Caco-2 (cell line): ENCODE measurements at regions of chr10 and their contacts with region 1.

Region 1: GRCh38 chr10:21020545-21020944 is 123.4 kb upstream of the NEBL start:
- DNase-seq: peak; percentile 66 to 72
- H3K4me3 ChIP-seq: no peak overlapping the region
- H3K4me3 Mint-ChIP-seq: no peak overlapping the region
- H3K27ac Mint-ChIP-seq: no peak overlapping the region
- H3K4me1 ChIP-seq: no peaks in the 10 kb centered on the region
- H3K4me1 Mint-ChIP-seq: peaks cover 7% of the 10 kb centered on the region
- H3K27me3 ChIP-seq: no peaks in the 10 kb centered on the region
- H3K27me3 Mint-ChIP-seq: no peaks in the 10 kb centered on the region
- CTCF ChIP-seq: peak; percentile 56

Region 2: DNA sequence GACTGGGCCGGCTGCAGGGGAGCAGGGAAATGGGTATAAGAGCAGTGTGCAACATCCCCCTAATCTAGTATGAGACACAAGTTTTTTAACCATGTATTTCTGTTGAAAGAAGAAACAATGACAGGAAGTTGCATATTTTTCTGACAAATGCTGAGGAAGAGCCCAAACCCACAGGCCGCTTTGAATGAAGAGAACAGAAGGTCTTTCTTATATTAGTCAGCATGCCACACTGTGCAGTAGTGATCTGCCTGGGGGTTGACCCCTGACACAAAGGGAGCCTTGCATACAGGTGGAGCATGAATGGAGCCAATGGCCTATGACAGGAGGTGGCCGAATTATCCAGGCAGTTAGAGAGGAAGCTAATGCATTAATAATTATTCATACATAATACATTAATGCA is 686.0 kb before region 1 on chr10:
- CTCF ChIA-PET with region 1: no interaction called
- POLR2A ChIA-PET with region 1: no interaction called
- intact Hi-C with region 1: no loop called
- DNase-seq: no peak
- H3K4me3 ChIP-seq: no peak overlapping the region
- H3K4me3 Mint-ChIP-seq: no peak overlapping the region
- H3K27ac Mint-ChIP-seq: no peak overlapping the region
- H3K4me1 ChIP-seq: no peaks in the 10 kb centered on the region
- H3K4me1 Mint-ChIP-seq: no peaks in the 10 kb centered on the region
- H3K27me3 ChIP-seq: no peaks in the 10 kb centered on the region
- H3K27me3 Mint-ChIP-seq: peaks cover 8% of the 10 kb centered on the region
- CTCF ChIP-seq: no peak

Region 3: GRCh38 chr10:20877986-20878983 is 142.3 kb before region 1 on chr10:
- CTCF ChIA-PET with region 1: no interaction called
- POLR2A ChIA-PET with region 1: no interaction called
- intact Hi-C with region 1: loop called (anchors 5 kb)
- DNase-seq: no peak
- H3K4me3 ChIP-seq: no peak overlapping the region
- H3K4me3 Mint-ChIP-seq: no peak overlapping the region
- H3K27ac Mint-ChIP-seq: no peak overlapping the region
- H3K4me1 ChIP-seq: no peaks in the 10 kb centered on the region
- H3K4me1 Mint-ChIP-seq: no peaks in the 10 kb centered on the region
- H3K27me3 ChIP-seq: no peaks in the 10 kb centered on the region
- H3K27me3 Mint-ChIP-seq: no peaks in the 10 kb centered on the region
- CTCF ChIP-seq: no peak